Activated naive CD4-positive, alpha-beta T cell treated with anti-CD3 and anti-CD28 coated beads for 36 hours (primary cell): ENCODE measurements at regions of chr10 and their contacts with region 1.

Region 1: DNA sequence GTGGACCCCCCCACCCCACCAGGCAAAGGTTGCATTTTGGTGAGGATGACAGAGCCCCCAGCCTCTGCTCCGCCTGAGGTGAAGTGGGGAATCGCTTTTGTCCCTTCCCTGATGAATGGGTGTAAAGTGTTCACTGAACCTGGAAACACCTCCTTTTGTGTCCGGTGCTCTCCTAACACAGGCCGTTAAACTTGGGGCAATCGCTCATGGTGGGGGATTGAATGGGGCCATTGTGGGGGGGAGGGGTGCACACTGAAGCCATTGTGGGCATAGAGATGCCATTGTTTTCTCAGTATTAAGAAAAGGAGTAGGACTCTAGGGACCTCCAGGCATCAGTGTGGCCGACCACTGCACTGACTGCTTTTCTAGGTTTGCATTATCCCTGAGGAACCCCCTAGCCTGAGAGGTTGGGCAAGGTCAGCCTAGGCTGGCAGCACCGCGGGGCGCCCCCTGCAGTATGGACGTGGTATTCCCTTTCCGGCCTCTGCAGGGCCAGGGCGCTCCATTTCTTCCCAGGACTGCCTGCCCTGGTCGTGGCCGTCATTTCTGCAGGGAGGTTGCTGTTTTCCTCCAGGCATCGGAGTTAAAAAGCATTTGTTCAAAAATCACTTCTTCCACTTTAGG is 158.3 kb downstream of the TCF7L2 start:
- DNase-seq: peak; percentile 53
- H3K4me3 Mint-ChIP-seq: no peak overlapping the region
- H3K27ac Mint-ChIP-seq: no peak overlapping the region
- H3K4me1 Mint-ChIP-seq: no peaks in the 10 kb centered on the region
- H3K27me3 Mint-ChIP-seq: peaks cover 11% of the 10 kb centered on the region

Region 2: DNA sequence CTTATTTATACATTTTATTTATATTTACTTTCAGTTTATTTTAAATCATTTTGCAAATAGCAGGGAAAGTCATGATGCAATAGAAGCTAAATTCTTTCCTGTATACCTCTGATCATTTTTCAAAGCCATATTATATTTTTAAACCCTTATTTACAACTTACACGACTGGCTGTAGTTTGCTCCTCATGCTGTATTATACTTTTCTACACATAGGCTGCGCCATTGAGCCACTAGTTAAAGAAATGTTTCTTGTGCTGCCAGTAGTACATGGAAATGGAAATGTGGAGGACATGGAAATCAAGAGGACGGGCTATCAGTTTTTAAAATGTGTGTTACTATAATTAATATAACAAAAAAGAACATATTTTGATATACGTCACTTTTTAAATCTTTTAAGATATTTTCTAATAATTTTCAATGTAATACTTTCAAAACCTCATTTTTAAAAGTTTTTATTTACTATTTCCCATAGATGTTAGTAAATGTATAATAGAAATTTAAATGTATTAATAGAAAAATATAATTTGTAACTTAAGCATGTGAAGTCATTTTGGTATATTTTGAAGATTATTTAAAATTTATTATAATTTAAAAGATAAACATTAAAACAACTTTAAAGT is 542.8 kb before region 1 on chr10:
- CTCF ChIA-PET with region 1: no interaction called
- intact Hi-C with region 1: loop called (anchors 5 kb)
- DNase-seq: peak; percentile 36
- H3K4me3 Mint-ChIP-seq: no peak overlapping the region
- H3K27ac Mint-ChIP-seq: no peak overlapping the region
- H3K4me1 Mint-ChIP-seq: no peaks in the 10 kb centered on the region
- H3K27me3 Mint-ChIP-seq: no peaks in the 10 kb centered on the region

Region 3: DNA sequence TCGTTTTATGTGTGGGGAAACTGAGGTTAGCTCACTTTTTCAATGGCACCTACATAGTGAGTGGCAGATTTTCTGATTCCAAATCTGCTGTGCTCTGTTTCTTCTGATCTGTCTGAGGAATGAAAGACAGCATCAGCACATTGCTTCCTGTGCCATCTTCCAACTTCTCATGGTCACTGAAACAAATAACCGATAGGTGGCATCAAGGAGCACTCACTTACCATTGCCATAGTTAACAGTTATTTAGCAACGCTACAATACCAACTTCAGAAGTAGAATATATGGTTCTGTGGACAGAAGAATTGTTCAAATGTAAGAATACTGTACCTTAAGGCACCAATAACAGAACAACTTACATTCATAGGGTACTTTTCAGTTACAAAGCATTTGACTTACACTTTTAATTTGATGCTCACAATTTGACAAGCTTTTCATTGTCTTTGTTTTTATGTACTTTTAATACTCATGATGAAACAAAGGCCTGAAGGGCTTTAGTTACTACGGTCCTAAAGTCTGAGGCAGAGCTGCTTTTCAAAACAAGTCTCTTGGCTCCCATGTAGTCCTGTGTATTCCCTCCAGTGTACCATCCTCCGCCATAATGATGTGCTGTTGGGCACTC is 387.1 kb before region 1 on chr10:
- CTCF ChIA-PET with region 1: interaction called, 3 read pairs
- intact Hi-C with region 1: loop called (anchors 1 kb)
- DNase-seq: peak; percentile 14
- H3K4me3 Mint-ChIP-seq: no peak overlapping the region
- H3K27ac Mint-ChIP-seq: no peak overlapping the region
- H3K4me1 Mint-ChIP-seq: no peaks in the 10 kb centered on the region
- H3K27me3 Mint-ChIP-seq: no peaks in the 10 kb centered on the region

Region 4: GRCh38 chr10:113273181-113274163 is 165.1 kb after region 1 on chr10:
- CTCF ChIA-PET with region 1: no interaction called
- intact Hi-C with region 1: no loop called
- DNase-seq: no peak
- H3K4me3 Mint-ChIP-seq: no peak overlapping the region
- H3K27ac Mint-ChIP-seq: no peak overlapping the region
- H3K4me1 Mint-ChIP-seq: no peaks in the 10 kb centered on the region
- H3K27me3 Mint-ChIP-seq: peaks cover 4% of the 10 kb centered on the region